ENCODE measurements at regions of chr6 and their contacts with region 1.

Region 1: GRCh38 chr6:26122793-26123674 is 35.8 kb downstream of the HFE start:
- DNase-seq: peak; percentile 94
- H3K4me3 ChIP-seq: peak overlapping the region; percentile 72
- CTCF ChIP-seq: no peak

Region 2: DNA sequence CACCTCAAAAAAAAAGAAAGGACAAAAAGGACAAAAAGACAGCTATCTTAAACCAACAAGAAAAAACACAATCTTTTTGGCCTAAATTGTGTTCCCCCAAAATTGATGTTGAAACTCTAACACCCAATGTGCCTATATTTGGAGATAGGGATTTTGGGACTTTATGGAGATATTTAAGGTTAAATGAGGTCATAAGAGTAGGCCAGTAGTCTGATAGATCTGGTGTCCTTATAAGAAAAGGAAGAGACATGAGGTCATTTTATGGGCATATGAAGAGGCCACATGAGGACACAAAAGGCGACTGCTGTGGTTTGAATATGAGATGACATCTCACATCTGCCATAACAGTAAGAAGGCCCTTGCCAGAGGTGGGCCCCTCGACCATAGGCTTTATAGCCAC is 111.0 kb before region 1 on chr6:
- CTCF ChIA-PET with region 1: no interaction called
- POLR2A ChIA-PET with region 1: no interaction called
- DNase-seq: no peak
- H3K4me3 ChIP-seq: no peak overlapping the region
- CTCF ChIP-seq: no peak

Region 3: DNA sequence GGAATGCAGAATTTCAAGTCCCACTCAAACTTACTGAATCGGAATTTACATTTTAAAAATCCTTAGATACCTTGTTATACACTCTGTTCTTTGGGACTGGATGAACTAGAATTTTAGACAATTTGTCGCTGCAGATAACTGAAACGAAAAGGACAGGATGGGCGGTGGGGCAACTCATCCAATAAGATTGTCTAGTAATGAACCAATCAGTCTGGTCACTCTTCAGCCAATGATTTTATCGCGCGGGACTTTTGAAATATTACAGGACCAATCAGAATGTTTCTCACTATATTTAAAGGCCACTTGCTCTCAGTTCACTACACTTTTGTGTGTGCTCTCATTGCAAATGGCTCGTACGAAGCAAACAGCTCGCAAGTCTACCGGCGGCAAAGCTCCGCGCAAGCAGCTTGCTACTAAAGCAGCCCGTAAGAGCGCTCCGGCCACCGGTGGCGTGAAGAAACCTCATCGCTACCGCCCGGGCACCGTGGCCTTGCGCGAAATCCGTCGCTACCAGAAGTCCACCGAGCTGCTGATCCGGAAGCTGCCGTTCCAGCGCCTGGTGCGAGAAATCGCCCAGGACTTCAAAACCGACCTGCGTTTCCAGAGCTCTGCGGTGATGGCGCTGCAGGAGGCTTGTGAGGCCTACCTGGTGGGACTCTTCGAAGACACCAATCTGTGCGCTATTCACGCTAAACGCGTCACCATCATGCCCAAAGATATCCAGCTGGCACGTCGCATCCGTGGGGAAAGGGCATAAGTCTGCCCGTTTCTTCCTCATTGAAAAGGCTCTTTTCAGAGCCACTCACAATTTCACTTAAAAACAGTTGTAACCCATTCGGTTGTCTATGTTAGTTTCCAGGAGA is 77.7 kb before region 1 on chr6:
- CTCF ChIA-PET with region 1: no interaction called
- POLR2A ChIA-PET with region 1: interaction called, 31 read pairs
- DNase-seq: no peak
- H3K4me3 ChIP-seq: peak overlapping the region; percentile 64
- CTCF ChIP-seq: no peak

Region 4: DNA sequence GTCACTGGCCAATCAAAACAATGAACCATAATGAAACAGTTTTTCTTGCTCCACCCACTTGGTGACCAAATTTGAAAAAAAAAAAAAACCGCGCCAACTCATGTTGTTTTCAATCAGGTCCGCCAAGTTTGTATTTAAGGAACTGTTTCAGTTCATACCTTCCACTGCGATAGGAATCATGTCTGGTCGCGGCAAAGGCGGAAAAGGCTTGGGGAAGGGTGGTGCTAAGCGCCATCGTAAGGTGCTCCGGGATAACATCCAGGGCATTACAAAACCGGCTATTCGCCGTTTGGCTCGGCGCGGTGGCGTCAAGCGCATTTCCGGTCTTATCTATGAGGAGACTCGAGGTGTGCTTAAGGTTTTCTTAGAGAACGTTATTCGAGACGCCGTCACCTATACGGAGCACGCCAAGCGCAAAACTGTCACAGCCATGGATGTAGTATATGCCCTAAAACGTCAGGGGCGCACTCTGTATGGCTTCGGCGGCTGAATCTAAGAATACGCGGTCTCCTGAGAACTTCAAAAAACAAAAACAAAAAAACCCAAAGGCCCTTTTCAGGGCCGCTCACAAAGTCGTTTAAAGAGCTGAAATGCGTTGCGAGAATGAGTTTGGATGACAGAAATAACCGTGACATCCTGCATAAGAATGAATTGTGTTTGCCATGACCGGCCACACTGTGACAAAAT is 19.1 kb before region 1 on chr6:
- CTCF ChIA-PET with region 1: interaction called, 8 read pairs
- POLR2A ChIA-PET with region 1: interaction called, 37 read pairs
- DNase-seq: peak; percentile 79
- H3K4me3 ChIP-seq: peak overlapping the region; percentile 65
- CTCF ChIP-seq: peak; percentile 41

Region 5: DNA sequence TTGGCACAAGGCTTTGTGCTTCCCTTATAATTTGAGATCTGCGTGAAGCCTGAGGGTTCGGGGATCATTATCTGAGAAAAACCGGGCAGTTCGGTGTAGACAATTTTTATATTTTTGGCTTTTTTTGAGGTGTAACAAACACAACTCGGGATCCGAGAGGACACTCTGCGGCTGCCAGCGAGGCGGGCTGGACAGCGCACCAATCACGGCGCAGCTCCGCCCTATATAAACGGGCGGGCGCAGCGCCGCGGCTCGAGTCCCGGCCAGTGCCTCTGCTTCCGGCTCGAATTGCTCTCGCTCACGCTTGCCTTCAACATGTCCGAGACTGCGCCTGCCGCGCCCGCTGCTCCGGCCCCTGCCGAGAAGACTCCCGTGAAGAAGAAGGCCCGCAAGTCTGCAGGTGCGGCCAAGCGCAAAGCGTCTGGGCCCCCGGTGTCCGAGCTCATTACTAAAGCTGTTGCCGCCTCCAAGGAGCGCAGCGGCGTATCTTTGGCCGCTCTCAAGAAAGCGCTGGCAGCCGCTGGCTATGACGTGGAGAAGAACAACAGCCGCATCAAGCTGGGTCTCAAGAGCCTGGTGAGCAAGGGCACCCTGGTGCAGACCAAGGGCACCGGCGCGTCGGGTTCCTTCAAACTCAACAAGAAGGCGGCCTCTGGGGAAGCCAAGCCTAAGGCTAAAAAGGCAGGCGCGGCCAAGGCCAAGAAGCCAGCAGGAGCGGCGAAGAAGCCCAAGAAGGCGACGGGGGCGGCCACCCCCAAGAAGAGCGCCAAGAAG is 33.2 kb after region 1 on chr6:
- CTCF ChIA-PET with region 1: interaction called, 6 read pairs
- POLR2A ChIA-PET with region 1: interaction called, 293 read pairs
- DNase-seq: peak; percentile 28
- H3K4me3 ChIP-seq: peak overlapping the region; percentile 68
- CTCF ChIP-seq: no peak

Region 6: DNA sequence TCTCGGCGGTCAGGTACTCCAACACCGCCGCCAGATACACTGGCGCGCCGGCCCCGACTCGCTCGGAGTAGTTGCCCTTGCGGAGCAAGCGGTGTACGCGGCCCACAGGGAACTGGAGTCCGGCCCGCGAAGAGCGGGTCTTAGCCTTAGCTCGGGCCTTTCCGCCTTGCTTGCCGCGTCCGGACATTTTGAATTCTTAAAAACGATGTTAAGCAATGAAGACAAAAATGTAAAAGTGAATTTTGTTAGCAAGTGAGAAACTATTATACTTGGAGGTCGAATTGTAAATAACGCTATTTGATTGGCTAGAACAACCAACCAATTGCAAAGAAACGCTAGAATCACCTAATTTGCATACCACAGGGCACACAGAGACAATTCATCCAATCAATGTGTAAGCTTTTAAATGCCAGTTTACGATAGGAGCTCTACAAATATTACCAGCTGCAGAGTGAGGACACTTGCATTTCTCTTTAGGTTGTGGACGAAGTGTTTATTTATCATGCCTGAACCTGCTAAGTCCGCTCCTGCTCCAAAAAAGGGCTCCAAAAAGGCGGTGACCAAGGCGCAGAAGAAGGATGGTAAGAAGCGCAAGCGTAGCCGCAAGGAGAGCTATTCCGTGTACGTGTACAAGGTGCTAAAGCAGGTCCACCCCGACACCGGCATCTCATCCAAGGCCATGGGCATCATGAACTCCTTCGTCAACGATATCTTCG is 76.2 kb after region 1 on chr6:
- CTCF ChIA-PET with region 1: interaction called, 5 read pairs
- POLR2A ChIA-PET with region 1: interaction called, 104 read pairs
- DNase-seq: no peak
- H3K4me3 ChIP-seq: peak overlapping the region; percentile 85
- CTCF ChIP-seq: no peak

Region 7: DNA sequence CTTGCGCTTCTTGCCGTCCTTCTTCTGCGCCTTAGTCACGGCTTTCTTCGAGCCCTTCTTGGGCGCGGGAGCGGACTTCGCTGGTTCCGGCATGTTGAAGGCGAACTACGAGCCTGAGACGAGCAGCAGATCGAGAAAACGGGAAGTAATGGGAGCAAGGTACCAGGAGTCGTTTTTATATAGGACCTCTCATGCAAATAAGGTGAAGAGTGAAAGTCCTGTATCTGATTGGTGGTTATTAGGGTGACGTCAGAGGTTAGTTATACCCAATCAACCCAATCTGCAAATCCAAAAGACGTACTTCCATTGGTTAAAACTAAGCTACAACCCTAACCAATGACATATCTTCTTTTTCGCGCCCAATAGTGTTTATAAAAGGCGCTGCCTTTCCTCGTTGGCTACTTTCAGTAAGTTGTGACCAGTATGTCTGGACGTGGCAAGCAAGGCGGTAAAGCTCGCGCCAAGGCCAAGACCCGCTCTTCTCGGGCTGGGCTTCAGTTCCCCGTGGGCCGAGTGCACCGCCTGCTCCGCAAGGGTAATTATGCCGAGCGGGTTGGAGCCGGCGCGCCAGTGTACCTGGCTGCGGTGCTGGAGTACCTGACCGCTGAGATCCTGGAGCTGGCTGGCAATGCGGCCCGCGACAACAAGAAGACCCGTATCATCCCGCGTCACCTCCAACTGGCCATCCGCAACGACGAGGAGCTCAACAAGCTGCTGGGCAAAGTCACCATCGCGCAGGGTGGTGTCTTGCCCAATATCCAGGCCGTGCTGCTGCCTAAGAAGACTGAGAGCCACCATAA is 1023.9 kb after region 1 on chr6:
- CTCF ChIA-PET with region 1: no interaction called
- POLR2A ChIA-PET with region 1: interaction called, 13 read pairs
- DNase-seq: peak; percentile 100
- H3K4me3 ChIP-seq: peak overlapping the region; percentile 88
- CTCF ChIP-seq: no peak

Measured in AG04449 (cell line).